ENCODE measurements at regions of chr5 and their contacts with region 1.

Region 1: DNA sequence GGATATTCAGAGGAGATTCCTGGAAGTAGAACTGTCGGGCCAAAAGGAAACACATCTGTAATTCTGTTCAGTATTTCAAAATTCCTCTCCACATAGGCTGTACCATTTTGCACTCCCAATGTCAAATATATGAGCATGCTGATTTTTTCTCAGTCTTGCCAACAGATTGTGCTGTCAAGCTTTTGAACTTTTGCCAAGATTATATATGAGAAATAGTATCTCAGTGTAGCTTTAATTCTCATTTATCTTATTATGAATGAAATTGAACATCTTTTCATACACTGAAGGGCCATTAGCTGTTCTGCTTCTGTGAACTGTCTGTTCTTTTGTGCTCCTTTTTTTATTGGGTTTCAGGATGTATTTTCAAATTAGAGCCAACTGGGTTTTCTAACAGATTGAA is 907.1 kb downstream of the MAT2B start:
- DNase-seq: no peak
- H3K4me3 ChIP-seq: no peak overlapping the region
- H3K27ac ChIP-seq: no peak overlapping the region
- H3K4me1 ChIP-seq: no peaks in the 10 kb centered on the region
- H3K27me3 ChIP-seq: no peaks in the 10 kb centered on the region
- CTCF ChIP-seq: no peak

Region 2: GRCh38 chr5:163612358-163613149 is 800.0 kb before region 1 on chr5:
- CTCF ChIA-PET with region 1: interaction called, 21 read pairs
- dilution Hi-C with region 1: no loop called
- in situ Hi-C with region 1: no loop called
- intact Hi-C with region 1: no loop called
- DNase-seq: no peak
- H3K4me3 ChIP-seq: no peak overlapping the region
- H3K27ac ChIP-seq: no peak overlapping the region
- H3K4me1 ChIP-seq: no peaks in the 10 kb centered on the region
- H3K27me3 ChIP-seq: peaks cover 7% of the 10 kb centered on the region
- CTCF ChIP-seq: no peak